Kidney (tissue), 22 donors: ENCODE measurements at regions of chr10 and their contacts with region 1.

Region 1: GRCh38 chr10:26556748-26557640 is 118.9 kb downstream of the APBB1IP start:
- DNase-seq: peak in 3 of 5 donors; percentile 38 to 70 (median 62)
- H3K4me3 ChIP-seq: no peak overlapping the region
- H3K27ac ChIP-seq: no peak overlapping the region
- H3K4me1 ChIP-seq: no peaks in the 10 kb centered on the region
- H3K27me3 ChIP-seq: no peaks in the 10 kb centered on the region
- CTCF ChIP-seq: peak; percentile 82

Region 2: DNA sequence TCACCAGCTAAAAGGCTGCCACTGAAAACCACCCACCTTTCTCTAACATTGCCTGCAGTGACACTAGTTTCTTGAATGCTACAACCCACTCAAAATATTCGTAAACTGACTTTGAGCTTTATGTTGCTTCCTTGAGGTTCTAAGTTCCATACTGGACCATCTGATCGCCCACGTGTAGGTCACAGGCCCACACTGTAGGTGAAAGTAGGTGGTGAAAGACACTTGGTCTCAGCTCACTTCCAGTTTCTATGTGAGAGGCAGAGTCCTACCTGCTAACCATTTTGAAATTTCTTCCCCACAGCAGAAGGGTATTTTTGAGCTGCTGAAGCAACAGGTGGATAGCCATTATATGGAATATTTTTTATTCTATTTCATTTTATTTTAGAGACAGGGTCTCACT is 525.7 kb before region 1 on chr10:
- intact Hi-C with region 1: no loop called
- DNase-seq: no peak
- H3K4me3 ChIP-seq: no peak overlapping the region
- H3K27ac ChIP-seq: no peak overlapping the region
- H3K4me1 ChIP-seq: no peaks in the 10 kb centered on the region
- H3K27me3 ChIP-seq: no peaks in the 10 kb centered on the region
- CTCF ChIP-seq: no peak

Region 3: GRCh38 chr10:26334932-26335573 is 221.9 kb before region 1 on chr10:
- intact Hi-C with region 1: loop called (anchors 10 kb)
- DNase-seq: peak in 4 of 5 donors; percentile 53 to 74 (median 69)
- H3K4me3 ChIP-seq: peak overlapping the region in 1 of 3 donors; percentile 22
- H3K27ac ChIP-seq: no peak overlapping the region
- H3K4me1 ChIP-seq: no peaks in the 10 kb centered on the region
- H3K27me3 ChIP-seq: no peaks in the 10 kb centered on the region
- CTCF ChIP-seq: peak; percentile 74

Region 4: GRCh38 chr10:27745732-27746396 is 1188.9 kb after region 1 on chr10 and contains the start of gene MKX:
- intact Hi-C with region 1: no loop called
- DNase-seq: peak; percentile 75 to 82 (median 80)
- H3K4me3 ChIP-seq: peak within 1 kb of the TSS in 1 of 3 donors; percentile 21
- H3K27ac ChIP-seq: no peak within 1 kb of the TSS
- H3K4me1 ChIP-seq: peaks cover 0 to 22% (median 0%) of the 10 kb centered on the region in 3 donors
- H3K27me3 ChIP-seq: peaks cover 54% of the 10 kb centered on the region
- CTCF ChIP-seq: no peak
- total RNA-seq, gene MKX: 1.3 TPM